Activated CD4-positive, alpha-beta T cell treated with anti-CD3 and anti-CD28 coated beads for 36 hours (primary cell): ENCODE measurements at regions of chr14 and their contacts with region 1.

Region 1: DNA sequence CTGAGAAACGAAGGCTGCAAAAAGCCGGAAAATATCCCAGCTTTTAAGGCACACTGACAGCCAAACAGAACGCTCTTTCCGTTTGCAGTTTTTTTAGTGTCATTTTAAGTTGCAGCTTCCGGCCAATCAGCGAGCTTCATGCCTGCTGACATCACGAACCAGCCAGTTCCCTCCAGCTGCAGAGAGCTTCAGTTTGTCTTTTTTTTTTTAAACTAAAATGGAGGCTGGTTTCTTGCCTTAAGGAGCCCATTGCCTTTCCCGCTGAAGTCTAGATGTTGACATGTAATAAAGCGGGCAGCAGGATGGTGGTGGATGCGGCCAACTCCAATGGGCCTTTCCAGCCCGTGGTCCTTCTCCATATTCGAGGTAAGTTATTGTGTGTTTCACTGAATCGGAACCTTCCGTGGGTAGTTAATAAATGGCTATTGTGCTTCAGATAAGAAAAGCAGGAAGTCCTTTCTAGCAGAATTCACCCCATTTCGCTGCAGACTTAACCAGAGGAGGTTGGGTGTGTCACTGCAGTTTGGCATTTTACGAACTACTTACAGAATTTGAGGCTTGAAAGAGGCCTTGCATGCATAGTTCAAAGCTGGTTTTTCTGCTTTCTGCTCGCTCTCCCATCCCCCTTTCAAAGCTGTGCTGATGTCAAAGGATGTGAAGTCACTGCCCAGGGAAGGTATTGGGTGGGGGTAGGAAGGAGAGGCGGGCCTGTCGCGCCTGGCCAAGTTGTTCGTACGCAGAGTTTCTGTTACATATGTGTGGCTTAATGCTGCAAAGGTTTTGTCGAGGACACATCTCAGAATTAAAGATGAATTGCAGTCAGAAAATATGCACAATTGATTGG is 48.4 kb downstream of the PPP2R5C start:
- DNase-seq: peak; percentile 90
- ATAC-seq: peak; percentile 86
- H3K4me3 Mint-ChIP-seq: peak overlapping the region; percentile 97
- H3K27ac Mint-ChIP-seq: peak overlapping the region; percentile 99
- H3K4me1 Mint-ChIP-seq: peaks cover 49% of the 10 kb centered on the region
- H3K27me3 Mint-ChIP-seq: no peaks in the 10 kb centered on the region

Region 2: DNA sequence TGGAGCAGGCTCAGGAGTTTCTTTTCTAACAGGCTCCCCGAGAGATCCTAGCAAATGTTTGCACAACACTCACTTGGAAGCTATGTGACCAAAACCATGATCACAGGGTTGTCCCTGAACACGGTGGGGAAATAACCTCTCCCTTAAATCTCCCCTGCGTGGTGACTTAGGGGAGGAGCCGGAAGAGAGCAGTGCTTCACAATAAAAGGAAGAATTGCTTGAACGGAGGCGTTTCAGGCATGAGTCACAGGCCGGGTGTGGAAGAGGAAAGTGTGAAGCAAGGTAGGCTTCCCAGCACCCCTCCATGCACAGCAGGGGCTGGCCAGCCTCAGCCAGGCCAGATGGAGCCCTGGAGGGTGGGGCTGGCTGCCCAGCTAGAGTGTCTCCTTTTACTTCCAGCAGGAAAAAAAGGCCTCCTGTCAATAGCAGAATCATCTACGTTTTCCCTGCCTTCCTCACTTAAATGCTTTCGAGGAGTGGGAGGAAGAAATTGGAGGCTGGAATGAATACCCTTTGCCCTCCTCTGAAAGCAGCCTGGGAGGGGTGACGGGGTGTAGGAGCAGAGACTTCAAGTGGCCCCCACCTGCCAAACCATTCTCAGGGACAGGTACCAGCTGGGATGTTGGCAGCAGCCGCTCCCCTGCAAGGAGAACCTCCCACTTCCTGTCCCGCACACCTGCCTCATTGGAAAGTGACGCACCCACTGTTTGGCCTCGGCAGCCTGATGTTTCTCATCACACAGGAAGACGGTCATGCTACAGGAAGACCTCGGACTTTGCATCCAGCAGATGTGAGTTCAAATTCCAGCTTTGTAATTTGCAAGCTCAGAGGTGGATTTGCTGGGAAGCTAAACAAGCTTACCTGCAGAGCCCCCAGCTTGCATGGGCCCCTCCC is 78.5 kb before region 1 on chr14:
- CTCF ChIA-PET with region 1: no interaction called
- POLR2A ChIA-PET with region 1: no interaction called
- intact Hi-C with region 1: loop called in 1 of 2 experiments (anchors 1 kb)
- DNase-seq: peak; percentile 94
- ATAC-seq: peak; percentile 92
- H3K4me3 Mint-ChIP-seq: peak overlapping the region; percentile 66
- H3K27ac Mint-ChIP-seq: peak overlapping the region; percentile 97
- H3K4me1 Mint-ChIP-seq: peaks cover 64% of the 10 kb centered on the region
- H3K27me3 Mint-ChIP-seq: no peaks in the 10 kb centered on the region

Region 3: DNA sequence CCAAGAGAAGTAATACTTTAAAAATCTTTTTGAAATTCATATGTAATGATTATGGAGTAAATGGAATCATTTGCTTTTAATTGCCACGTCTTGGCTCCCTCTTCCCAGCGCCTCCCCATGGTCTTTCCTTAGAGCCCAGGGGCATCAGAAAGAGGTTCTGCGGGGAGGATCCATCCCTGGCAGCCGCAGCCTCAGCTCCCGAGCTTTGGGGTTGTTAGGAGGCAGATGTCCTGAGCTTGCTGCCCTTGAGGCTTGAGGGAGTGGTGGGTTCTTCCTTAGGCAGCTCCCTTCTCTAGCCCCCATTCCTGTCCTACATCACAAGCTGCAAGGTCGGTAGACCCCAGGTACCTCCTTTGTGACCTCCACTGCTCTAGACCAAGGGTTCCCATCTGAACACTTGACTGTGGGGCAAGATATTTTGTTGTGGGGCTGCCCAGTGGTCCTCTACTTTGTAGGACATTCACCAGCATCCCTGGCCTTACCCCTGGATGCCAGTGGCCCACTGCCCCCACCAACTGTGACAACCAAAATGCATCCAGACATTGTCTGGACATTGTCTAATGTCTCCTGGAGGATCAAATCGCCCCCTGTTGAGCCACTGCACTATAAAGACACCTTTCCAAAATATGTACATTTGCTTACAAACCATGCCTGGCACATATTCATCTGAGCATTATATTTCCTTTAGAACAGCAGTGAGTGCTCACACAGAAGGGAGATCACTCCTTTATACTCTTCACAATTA is 42.1 kb before region 1 on chr14:
- CTCF ChIA-PET with region 1: interaction called, 24 read pairs
- POLR2A ChIA-PET with region 1: interaction called, 7 read pairs
- intact Hi-C with region 1: no loop called
- DNase-seq: no peak
- ATAC-seq: no peak
- H3K4me3 Mint-ChIP-seq: no peak overlapping the region
- H3K27ac Mint-ChIP-seq: no peak overlapping the region
- H3K4me1 Mint-ChIP-seq: peaks cover 42% of the 10 kb centered on the region
- H3K27me3 Mint-ChIP-seq: no peaks in the 10 kb centered on the region

Region 4: GRCh38 chr14:101791919-101792572 is 17.8 kb before region 1 on chr14:
- CTCF ChIA-PET with region 1: interaction called, 21 read pairs
- POLR2A ChIA-PET with region 1: interaction called, 9 read pairs
- intact Hi-C with region 1: loop called in 1 of 2 experiments (anchors 1 kb)
- DNase-seq: no peak
- ATAC-seq: peak; percentile 92
- H3K4me3 Mint-ChIP-seq: peak overlapping the region; percentile 33
- H3K27ac Mint-ChIP-seq: peak overlapping the region; percentile 63
- H3K4me1 Mint-ChIP-seq: peaks cover 30% of the 10 kb centered on the region
- H3K27me3 Mint-ChIP-seq: no peaks in the 10 kb centered on the region

Region 5: GRCh38 chr14:102805371-102806246 is 995.7 kb after region 1 on chr14:
- CTCF ChIA-PET with region 1: no interaction called
- POLR2A ChIA-PET with region 1: no interaction called
- intact Hi-C with region 1: loop called in 1 of 2 experiments (anchors 5 kb)
- DNase-seq: peak; percentile 76
- ATAC-seq: peak; percentile 57
- H3K4me3 Mint-ChIP-seq: peak overlapping the region; percentile 65
- H3K27ac Mint-ChIP-seq: peak overlapping the region; percentile 96
- H3K4me1 Mint-ChIP-seq: peaks cover 78% of the 10 kb centered on the region
- H3K27me3 Mint-ChIP-seq: no peaks in the 10 kb centered on the region